ENCODE measurements at regions of chr13 and their contacts with region 1.

Region 1: GRCh38 chr13:36282818-36283445 is 14.7 kb downstream of the CCDC169 start:
- DNase-seq: no peak
- ATAC-seq: peak in 2 of 8 donors; percentile 57 to 61
- H3K4me3 ChIP-seq: no peak overlapping the region
- H3K27ac ChIP-seq: no peak overlapping the region
- H3K4me1 ChIP-seq: peaks cover 0 to 4% (median 0%) of the 10 kb centered on the region in 9 donors
- H3K27me3 ChIP-seq: no peaks in the 10 kb centered on the region
- CTCF ChIP-seq: peak; percentile 55 to 86 (median 79)

Region 2: DNA sequence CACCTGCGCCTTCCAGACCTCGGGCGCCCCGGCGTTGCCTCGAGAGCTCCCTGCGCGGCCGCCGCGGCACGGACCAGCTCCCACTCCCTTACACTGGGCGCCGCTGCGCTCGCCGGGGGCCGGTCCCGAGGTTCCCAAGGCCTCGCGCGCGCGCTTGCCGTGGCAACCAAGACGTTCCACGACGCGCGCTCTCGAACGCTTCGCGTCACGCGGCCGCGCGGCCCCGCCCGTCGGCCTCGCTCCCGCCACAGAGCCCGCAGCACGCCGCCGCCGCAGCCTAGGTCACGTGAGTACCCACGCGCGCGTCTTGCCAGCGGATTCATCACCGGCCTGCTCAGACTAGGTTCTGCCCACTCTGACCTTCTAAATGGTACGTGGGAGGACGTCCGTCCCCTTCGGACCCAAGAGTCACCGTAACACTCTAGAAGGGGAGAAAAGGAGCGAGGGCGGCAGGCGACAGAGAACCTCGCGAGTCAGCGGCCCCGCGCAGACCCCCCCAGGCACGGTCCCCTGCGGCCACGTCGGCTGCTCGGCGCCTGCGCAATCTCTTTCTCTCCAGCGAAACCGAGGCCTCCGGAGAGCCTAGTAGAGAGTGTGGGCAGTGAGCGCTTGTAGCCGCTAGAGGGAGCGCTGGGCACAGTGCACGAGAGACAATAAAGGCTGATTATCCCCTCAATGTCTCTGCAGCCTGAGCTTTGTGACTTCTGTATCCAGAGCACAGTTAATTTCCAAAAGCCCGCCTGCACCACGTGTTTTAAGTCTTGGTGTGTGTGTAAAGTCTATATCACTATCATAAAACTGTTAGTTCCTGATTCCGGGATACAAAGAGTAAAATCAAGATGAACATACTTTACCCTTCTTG is 63.5 kb after region 1 on chr13 and contains the start of gene SPART:
- intact Hi-C with region 1: loop called in 1 of 10 experiments (anchors 2 kb)
- DNase-seq: peak; percentile 91 to 93
- ATAC-seq: peak; percentile 91 to 96 (median 94)
- H3K4me3 ChIP-seq: peak within 1 kb of the TSS; percentile 62 to 93 (median 72)
- H3K27ac ChIP-seq: peak within 1 kb of the TSS; percentile 87 to 99 (median 96)
- H3K4me1 ChIP-seq: peaks cover 0 to 45% (median 26%) of the 10 kb centered on the region in 9 donors
- H3K27me3 ChIP-seq: no peaks in the 10 kb centered on the region
- CTCF ChIP-seq: peak; percentile 92 to 100 (median 98)
- total RNA-seq, gene SPART: 29.3 to 49.8 (median 38.5) TPM

Region 3: DNA sequence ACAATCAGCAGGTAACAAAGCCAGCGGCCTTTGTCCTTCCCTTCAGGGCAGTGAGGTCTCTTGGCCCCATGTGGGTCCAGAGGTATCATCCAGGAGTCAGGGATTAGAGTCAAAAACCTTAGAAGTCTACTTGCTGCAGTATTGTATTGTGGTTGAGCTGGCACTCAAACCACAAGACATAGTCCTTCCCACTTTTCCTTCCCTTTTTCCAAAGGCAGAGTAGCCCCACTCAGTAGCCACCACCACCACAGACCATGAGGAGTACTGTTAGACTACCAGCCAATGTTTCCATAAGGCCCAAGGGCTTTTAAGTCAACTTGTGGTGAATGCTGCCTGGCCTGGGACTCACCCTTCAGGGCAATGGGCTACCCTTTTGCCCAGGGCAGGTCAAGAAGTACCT is 122.2 kb after region 1 on chr13:
- intact Hi-C with region 1: loop called in 1 of 10 experiments (anchors 10 kb)
- DNase-seq: no peak
- ATAC-seq: no peak
- H3K4me3 ChIP-seq: no peak overlapping the region
- H3K27ac ChIP-seq: no peak overlapping the region
- H3K4me1 ChIP-seq: no peaks in the 10 kb centered on the region
- H3K27me3 ChIP-seq: no peaks in the 10 kb centered on the region
- CTCF ChIP-seq: no peak

Region 4: DNA sequence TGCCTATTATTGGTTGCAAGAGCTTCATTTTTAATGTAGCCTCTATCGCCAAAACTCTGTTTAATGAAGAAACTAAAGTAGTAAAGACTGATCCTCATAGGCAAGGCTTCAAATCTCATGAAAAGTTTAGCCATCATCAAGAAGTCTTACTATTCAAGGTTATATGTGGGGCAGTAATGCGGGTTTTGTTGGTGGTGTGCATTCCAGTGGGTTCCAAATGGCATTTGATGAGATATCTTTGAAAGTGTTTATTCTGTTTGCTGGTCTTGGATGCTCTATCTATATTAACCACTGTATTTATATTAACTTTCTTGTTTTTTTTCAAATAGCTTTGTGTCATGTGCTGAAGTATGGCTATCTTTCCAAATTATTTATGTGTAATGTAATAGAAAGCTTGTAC is 463.1 kb after region 1 on chr13:
- intact Hi-C with region 1: loop called in 1 of 10 experiments (anchors 10 kb)
- DNase-seq: no peak
- ATAC-seq: no peak
- H3K4me3 ChIP-seq: no peak overlapping the region
- H3K27ac ChIP-seq: no peak overlapping the region
- H3K4me1 ChIP-seq: no peaks in the 10 kb centered on the region
- H3K27me3 ChIP-seq: peaks cover 0 to 5% (median 0%) of the 10 kb centered on the region in 7 donors
- CTCF ChIP-seq: no peak